Transverse colon (tissue), 4 donors: ENCODE measurements at regions of chr10 and their contacts with region 1.

Region 1: GRCh38 chr10:23742368-23742767 is 303.5 kb downstream of the OTUD1 start:
- DNase-seq: no peak
- H3K4me3 ChIP-seq: no peak overlapping the region
- H3K27ac ChIP-seq: no peak overlapping the region
- H3K4me1 ChIP-seq: no peaks in the 10 kb centered on the region
- H3K27me3 ChIP-seq: no peaks in the 10 kb centered on the region
- CTCF ChIP-seq: no peak
- EP300 ChIP-seq: no peak
- POLR2A ChIP-seq: no peak

Region 2: GRCh38 chr10:23826421-23826820 is 84.1 kb after region 1 on chr10:
- in situ Hi-C with region 1: loop called in 1 of 4 experiments (anchors 25 kb)
- intact Hi-C with region 1: no loop called
- DNase-seq: no peak
- H3K4me3 ChIP-seq: no peak overlapping the region
- H3K27ac ChIP-seq: no peak overlapping the region
- H3K4me1 ChIP-seq: no peaks in the 10 kb centered on the region
- H3K27me3 ChIP-seq: no peaks in the 10 kb centered on the region
- CTCF ChIP-seq: no peak
- EP300 ChIP-seq: no peak
- POLR2A ChIP-seq: no peak